CD8-positive, alpha-beta T cell (primary cell): ENCODE measurements at regions of chr12 and their contacts with region 1.

Region 1: GRCh38 chr12:17503742-17504141 is 586.3 kb downstream of the RERGL start:
- DNase-seq: no peak
- ATAC-seq: no peak
- H3K4me3 ChIP-seq: no peak overlapping the region
- H3K4me3 Mint-ChIP-seq: no peak overlapping the region
- H3K27ac ChIP-seq: no peak overlapping the region
- H3K27ac Mint-ChIP-seq: no peak overlapping the region
- H3K4me1 ChIP-seq: no peaks in the 10 kb centered on the region
- H3K4me1 Mint-ChIP-seq: no peaks in the 10 kb centered on the region
- H3K27me3 ChIP-seq: no peaks in the 10 kb centered on the region
- H3K27me3 Mint-ChIP-seq: no peaks in the 10 kb centered on the region
- CTCF ChIP-seq: no peak

Region 2: DNA sequence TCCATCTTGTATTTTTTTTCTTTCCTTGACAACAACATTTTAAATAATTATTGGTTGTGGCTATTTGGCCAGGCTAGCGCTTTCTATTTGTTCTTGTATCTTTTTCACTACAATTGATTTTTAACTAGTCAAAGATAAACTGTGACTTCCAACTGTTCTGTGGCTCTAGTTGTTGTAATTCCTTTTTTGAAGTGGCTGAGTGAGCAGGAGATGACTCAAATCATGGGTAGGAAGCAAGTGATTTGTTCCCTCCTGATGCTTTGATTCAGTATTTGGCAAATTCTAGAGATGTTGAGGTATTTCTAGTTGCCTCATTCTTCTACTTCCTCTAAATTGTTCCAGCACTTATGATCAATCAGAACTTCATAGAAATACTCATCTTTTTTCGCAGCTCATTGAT is 47.3 kb before region 1 on chr12:
- CTCF ChIA-PET with region 1: no interaction called
- POLR2A ChIA-PET with region 1: no interaction called
- intact Hi-C with region 1: loop called in 1 of 2 experiments (anchors 5 kb)
- DNase-seq: no peak
- ATAC-seq: no peak
- H3K4me3 ChIP-seq: no peak overlapping the region
- H3K4me3 Mint-ChIP-seq: no peak overlapping the region
- H3K27ac ChIP-seq: no peak overlapping the region
- H3K27ac Mint-ChIP-seq: no peak overlapping the region
- H3K4me1 ChIP-seq: no peaks in the 10 kb centered on the region
- H3K4me1 Mint-ChIP-seq: no peaks in the 10 kb centered on the region
- H3K27me3 ChIP-seq: no peaks in the 10 kb centered on the region
- H3K27me3 Mint-ChIP-seq: no peaks in the 10 kb centered on the region
- CTCF ChIP-seq: no peak